ENCODE measurements at regions of chr15 and their contacts with region 1.

Region 1: GRCh38 chr15:99104788-99105513 is at the start of gene SYNM:
- DNase-seq: peak in 1 of 2 donors; percentile 92
- H3K4me3 ChIP-seq: peak within 1 kb of the TSS; percentile 76
- H3K27ac ChIP-seq: peak within 1 kb of the TSS; percentile 89 to 95
- H3K4me1 ChIP-seq: peaks cover 11 to 29% of the 10 kb centered on the region in 2 donors
- H3K27me3 ChIP-seq: no peaks in the 10 kb centered on the region
- CTCF ChIP-seq: peak; percentile 49 to 98 (median 70)
- total RNA-seq, gene SYNM: 37.7 TPM

Region 2: DNA sequence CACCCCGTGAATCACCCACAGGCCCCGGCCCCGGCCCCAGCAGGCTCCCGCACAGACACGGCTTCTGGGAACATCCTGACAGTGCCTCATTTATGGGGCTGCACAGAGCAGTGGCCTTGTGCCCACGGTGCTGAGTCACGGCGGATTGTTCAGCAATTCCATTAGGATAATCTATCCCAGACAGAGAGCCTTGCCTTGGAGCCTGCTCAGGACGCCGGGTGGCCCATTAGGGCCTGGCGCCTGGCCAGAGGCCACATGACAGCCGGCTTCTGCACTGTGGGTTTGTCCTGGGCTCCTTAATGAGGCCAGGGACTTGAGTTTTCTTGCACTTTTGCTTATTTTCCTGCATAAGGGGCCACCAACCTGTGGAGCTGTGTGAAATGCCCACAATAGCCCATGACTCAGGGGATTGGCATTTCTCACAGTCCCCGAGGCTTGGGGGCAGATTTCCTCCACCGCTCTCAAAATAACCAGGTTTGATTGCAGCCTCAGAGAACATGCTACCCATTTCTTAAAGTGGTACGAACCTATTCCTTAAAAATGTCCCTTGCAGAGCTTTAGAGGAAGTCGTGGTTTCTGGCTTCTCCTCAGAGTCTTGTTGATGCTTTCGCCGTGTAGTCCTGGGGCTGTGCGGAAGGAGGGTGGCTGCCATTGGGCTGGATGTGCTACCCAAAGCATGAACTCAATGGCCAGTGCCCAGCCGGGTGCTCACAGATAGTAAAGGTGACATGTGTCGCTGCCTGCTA is 18.9 kb after region 1 on chr15:
- intact Hi-C with region 1: loop called (anchors 1 kb)
- DNase-seq: peak; percentile 64 to 96
- H3K4me3 ChIP-seq: peak overlapping the region; percentile 11 to 59
- H3K27ac ChIP-seq: peak overlapping the region; percentile 97 to 98
- H3K4me1 ChIP-seq: peaks cover 27 to 46% of the 10 kb centered on the region in 2 donors
- H3K27me3 ChIP-seq: no peaks in the 10 kb centered on the region
- CTCF ChIP-seq: no peak

Region 3: GRCh38 chr15:99169769-99170311 is 64.9 kb after region 1 on chr15:
- intact Hi-C with region 1: loop called (anchors 5 kb)
- DNase-seq: peak in 1 of 2 donors; percentile 77
- H3K4me3 ChIP-seq: no peak overlapping the region
- H3K27ac ChIP-seq: peak overlapping the region; percentile 90 to 94
- H3K4me1 ChIP-seq: peaks cover 8 to 26% of the 10 kb centered on the region in 2 donors
- H3K27me3 ChIP-seq: no peaks in the 10 kb centered on the region
- CTCF ChIP-seq: no peak

Region 4: GRCh38 chr15:99181545-99181971 is 76.6 kb after region 1 on chr15:
- intact Hi-C with region 1: loop called (anchors 2 kb)
- DNase-seq: peak in 1 of 2 donors; percentile 86
- H3K4me3 ChIP-seq: no peak overlapping the region
- H3K27ac ChIP-seq: peak overlapping the region; percentile 82 to 84
- H3K4me1 ChIP-seq: peaks cover 0 to 43% of the 10 kb centered on the region in 2 donors
- H3K27me3 ChIP-seq: no peaks in the 10 kb centered on the region
- CTCF ChIP-seq: no peak

Region 5: GRCh38 chr15:99213187-99213811 is 108.3 kb after region 1 on chr15:
- intact Hi-C with region 1: loop called (anchors 1 kb)
- DNase-seq: peak; percentile 18 to 92
- H3K4me3 ChIP-seq: no peak overlapping the region
- H3K27ac ChIP-seq: no peak overlapping the region
- H3K4me1 ChIP-seq: no peaks in the 10 kb centered on the region
- H3K27me3 ChIP-seq: no peaks in the 10 kb centered on the region
- CTCF ChIP-seq: peak; percentile 76 to 88 (median 85)

Region 6: DNA sequence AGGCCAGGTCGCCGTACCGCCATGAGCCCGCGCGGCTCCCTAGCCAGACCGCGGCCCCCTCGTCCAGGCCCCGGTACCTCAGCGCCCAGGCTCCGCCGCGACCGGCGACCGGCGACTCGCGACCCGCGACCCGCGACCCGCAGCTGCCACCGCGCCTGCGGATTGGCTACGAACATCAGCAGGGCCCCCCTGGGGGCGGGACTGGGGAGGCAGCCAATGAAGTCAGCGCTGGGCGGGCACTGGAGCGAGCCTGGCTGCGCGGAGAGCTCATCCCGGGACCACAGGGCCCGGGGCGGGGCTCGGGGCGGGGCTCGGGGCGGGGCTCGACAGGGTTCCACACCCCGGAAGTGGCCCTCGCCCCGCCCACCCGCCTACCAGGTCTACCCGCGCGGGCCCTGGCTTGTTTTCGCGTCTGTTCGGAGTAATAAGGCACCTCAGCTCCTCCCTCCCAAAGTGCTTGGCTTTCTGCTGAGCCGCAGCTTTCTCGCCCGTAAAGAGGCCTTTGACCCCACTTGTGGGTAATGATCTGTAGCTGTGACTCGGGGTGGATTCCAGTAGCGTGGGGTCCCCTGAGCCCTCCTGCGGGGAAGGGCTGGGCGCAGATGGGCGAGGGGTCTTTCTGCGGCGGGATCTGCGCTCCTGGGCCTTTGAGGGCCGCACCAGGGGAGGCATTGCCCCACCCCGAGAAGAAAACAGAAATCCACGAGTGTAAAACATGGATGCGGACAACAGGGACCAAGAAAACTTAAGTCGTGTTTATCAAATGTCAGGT is 628.5 kb after region 1 on chr15 and contains the start of gene LYSMD4:
- intact Hi-C with region 1: loop called (anchors 10 kb)
- DNase-seq: peak; percentile 90 to 99
- H3K4me3 ChIP-seq: peak within 1 kb of the TSS; percentile 79 to 81
- H3K27ac ChIP-seq: peak within 1 kb of the TSS; percentile 83 to 84
- H3K4me1 ChIP-seq: peaks cover 0 to 21% of the 10 kb centered on the region in 2 donors
- H3K27me3 ChIP-seq: no peaks in the 10 kb centered on the region
- CTCF ChIP-seq: no peak
- total RNA-seq, gene LYSMD4: not detected